ENCODE measurements at regions of chr3 and their contacts with region 1.

Region 1: DNA sequence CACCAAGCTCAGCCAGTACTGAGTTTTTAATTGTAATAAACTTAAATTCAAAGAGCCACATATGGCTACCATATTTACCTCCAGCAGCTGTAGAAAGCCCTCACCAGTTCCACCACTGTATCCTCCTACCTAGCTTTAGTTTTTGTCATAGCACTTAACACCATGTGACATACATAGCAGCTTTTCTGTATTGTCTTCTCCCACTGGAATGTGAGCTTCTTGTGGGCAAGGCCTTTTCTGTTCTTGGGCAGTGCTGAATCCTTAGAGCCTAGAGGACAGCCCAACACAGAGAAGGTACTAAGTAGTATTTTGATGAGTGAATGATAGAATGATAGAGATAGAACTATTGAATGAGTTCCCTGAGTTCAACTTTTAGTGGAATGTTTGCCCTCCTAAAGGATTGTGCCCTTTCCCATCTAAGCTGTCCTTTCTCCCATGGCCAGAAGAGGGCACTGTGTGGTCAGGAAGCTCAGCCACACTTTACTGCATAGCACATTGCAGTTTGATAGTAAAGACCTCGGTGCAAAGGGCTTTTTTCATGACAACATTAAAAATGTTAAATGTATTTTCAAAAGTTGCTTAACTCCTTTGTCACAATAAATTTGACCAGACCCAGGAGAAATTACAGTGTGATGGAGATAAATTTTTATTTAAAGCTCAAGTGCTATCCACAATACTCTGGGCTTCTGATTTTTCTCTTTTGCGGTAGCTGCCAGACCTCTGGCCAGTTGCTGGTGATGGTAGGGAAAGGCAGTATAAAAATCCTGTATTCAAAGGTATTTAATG is 115.8 kb downstream of the GHSR start:
- DNase-seq: peak; percentile 55
- H3K4me3 Mint-ChIP-seq: no peak overlapping the region
- H3K27ac Mint-ChIP-seq: no peak overlapping the region
- H3K4me1 Mint-ChIP-seq: peaks cover 10% of the 10 kb centered on the region
- H3K27me3 Mint-ChIP-seq: no peaks in the 10 kb centered on the region

Region 2: DNA sequence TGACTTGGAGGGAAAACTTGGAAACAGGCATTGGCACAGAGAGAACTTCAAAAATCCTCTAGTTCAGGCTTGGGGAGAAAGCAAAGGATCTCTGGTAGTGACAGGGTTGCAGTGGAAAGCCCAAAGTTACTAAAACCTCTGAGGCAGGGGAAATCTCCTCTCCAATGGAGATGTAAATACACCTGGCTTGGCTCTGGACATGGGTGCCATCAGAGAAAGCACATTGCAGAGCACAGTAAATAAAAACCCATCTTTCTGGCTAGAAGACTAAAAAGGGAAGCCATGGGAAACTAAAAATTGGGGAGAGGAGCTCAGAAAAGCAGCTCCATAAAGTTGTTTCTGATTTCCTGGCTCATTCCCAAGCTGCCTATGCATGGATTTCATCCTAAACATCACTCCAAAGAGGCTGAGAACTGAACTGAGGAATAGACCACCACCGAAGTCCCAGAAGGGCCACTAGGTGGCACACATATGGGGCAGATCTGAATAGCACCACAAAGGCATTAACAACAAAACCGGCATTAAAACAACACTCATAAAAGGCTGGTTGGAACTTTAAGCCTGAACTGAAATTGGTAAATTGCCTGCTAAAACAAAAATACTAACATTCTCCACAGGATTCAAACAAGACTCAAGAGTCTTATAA is 628.6 kb before region 1 on chr3:
- CTCF ChIA-PET with region 1: no interaction called
- POLR2A ChIA-PET with region 1: no interaction called
- DNase-seq: peak; percentile 21
- H3K4me3 Mint-ChIP-seq: no peak overlapping the region
- H3K27ac Mint-ChIP-seq: no peak overlapping the region
- H3K4me1 Mint-ChIP-seq: no peaks in the 10 kb centered on the region
- H3K27me3 Mint-ChIP-seq: peaks cover 21% of the 10 kb centered on the region

Region 3: DNA sequence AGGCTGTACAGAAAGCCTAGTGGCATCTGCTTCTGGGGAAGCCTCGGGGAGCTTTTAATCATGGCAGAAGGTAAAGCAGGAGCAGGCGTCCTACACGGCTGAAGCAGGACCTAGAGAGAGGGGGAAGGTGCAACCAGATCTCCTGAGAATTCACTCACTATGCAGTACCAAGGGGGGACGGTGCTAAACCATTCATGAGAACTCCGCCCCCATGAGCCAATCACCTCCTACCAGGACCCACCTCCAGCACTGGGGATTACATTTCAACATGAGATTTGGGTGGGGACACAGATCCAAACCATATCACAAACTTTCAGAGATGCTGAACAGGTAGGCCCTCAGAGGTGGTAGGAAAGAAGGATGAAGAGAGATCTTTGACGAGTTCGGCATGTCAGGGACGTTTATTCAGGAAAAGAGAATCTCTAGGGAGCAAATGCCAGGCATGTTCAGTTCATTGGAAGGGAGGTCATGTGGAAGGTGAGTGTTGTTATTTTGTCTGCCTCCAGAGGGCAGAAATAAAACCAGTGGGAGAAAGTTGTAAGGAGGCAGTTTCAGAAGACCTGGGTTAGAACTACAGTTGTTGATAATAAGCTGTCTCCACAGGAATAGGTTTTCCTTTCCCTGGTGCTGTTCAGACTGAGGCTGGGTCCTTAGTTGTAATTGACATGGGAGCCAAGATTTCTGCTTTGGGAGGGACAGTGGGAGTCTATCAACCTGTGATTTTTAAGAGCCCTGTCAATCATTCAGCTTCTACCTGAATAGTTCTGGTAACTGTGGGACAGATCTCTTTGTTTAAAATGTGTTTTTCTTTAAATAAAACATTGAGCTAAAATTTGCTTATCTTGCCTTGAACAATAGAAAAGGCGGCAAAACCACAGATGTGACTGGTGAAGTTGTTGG is 297.4 kb before region 1 on chr3:
- CTCF ChIA-PET with region 1: interaction called, 28 read pairs
- POLR2A ChIA-PET with region 1: no interaction called
- DNase-seq: no peak
- H3K4me3 Mint-ChIP-seq: no peak overlapping the region
- H3K27ac Mint-ChIP-seq: no peak overlapping the region
- H3K4me1 Mint-ChIP-seq: peaks cover 31% of the 10 kb centered on the region
- H3K27me3 Mint-ChIP-seq: no peaks in the 10 kb centered on the region

Region 4: DNA sequence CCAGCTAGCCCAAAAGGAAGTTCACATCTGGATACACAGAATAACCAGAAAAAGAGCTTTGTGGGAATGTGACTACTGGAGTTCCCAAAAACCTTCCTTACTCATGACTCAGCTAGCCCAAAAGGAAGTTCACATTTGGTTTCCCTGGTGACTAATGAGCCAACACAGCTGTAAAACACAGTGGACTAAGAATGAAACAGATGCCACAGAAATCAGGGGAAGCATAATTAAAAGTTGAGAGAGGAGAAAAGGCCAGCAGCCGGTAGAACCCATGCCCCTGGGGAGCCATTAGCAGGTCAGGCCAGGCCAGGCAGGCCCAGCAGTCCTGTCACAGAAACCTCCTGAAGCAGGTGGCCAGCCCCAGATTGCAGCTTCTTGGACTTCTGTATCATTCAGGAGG is 14.5 kb before region 1 on chr3:
- CTCF ChIA-PET with region 1: interaction called, 16 read pairs
- POLR2A ChIA-PET with region 1: no interaction called
- DNase-seq: no peak
- H3K4me3 Mint-ChIP-seq: no peak overlapping the region
- H3K27ac Mint-ChIP-seq: no peak overlapping the region
- H3K4me1 Mint-ChIP-seq: peaks cover 13% of the 10 kb centered on the region
- H3K27me3 Mint-ChIP-seq: no peaks in the 10 kb centered on the region

Region 5: DNA sequence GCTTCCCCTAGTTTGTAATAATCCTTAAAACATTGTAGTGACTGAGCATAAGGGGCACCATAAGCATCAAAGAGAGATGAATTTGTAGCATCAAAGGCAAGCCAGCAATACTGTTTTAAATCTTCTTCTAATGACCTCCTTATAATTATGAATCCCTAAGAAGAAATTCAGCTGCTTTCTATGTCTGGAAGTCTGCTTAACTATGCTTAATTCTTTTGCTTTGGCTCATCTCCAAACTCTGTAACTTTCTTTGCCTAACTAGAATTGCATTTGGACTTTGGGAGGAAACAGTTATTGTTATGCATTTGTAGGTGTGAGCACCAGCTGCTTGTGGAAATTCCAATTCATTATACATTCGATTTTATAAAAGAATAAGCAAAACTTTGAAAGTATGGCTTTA is 926.2 kb after region 1 on chr3:
- CTCF ChIA-PET with region 1: no interaction called
- POLR2A ChIA-PET with region 1: no interaction called
- DNase-seq: no peak
- H3K4me3 Mint-ChIP-seq: no peak overlapping the region
- H3K27ac Mint-ChIP-seq: no peak overlapping the region
- H3K4me1 Mint-ChIP-seq: no peaks in the 10 kb centered on the region
- H3K27me3 Mint-ChIP-seq: no peaks in the 10 kb centered on the region